Activated T-helper 1 cell treated with anti-CD3 and anti-CD28 coated beads, Interleukin-12 subunit alpha, Interleukin-12 subunit beta, Interleukin-2, Interleukin-4 antibody, amounts not matched to agents 30 ng/mL and 10 ng/mL and 1 ng/mL, durations not matched to agents 14 hours and 24 hours and 36 hours (primary cell): ENCODE measurements at regions of chr9 and their contacts with region 1.

Region 1: GRCh38 chr9:34603610-34604231 is 8.2 kb downstream of the RPP25L start:
- DNase-seq: peak; percentile 68
- H3K4me3 Mint-ChIP-seq: no peak overlapping the region
- H3K27ac Mint-ChIP-seq: no peak overlapping the region
- H3K4me1 Mint-ChIP-seq: no peaks in the 10 kb centered on the region
- H3K27me3 Mint-ChIP-seq: peaks cover 11% of the 10 kb centered on the region

Region 2: DNA sequence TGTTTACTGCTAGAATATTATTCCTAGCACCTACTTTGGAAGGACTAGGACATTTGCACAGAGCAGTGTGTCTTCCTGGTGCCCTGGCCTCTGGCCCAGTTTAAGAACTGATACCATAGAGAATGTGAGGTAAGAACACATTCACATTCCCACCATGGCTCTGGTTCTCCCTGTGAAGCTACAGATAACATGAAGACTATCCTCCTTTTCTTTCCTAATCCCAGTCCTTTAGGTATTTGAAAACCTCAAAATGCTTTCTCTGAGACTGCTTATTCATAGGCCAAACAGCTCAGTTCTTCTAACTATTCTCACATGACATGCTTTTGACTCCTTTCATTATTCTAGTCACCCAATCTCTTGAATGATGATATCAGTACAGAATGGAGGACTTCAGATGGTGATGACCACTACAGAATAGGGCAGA is 157.2 kb before region 1 on chr9:
- intact Hi-C with region 1: no loop called
- DNase-seq: no peak
- H3K4me3 Mint-ChIP-seq: no peak overlapping the region
- H3K27ac Mint-ChIP-seq: no peak overlapping the region
- H3K4me1 Mint-ChIP-seq: peaks cover 9% of the 10 kb centered on the region
- H3K27me3 Mint-ChIP-seq: no peaks in the 10 kb centered on the region

Region 3: DNA sequence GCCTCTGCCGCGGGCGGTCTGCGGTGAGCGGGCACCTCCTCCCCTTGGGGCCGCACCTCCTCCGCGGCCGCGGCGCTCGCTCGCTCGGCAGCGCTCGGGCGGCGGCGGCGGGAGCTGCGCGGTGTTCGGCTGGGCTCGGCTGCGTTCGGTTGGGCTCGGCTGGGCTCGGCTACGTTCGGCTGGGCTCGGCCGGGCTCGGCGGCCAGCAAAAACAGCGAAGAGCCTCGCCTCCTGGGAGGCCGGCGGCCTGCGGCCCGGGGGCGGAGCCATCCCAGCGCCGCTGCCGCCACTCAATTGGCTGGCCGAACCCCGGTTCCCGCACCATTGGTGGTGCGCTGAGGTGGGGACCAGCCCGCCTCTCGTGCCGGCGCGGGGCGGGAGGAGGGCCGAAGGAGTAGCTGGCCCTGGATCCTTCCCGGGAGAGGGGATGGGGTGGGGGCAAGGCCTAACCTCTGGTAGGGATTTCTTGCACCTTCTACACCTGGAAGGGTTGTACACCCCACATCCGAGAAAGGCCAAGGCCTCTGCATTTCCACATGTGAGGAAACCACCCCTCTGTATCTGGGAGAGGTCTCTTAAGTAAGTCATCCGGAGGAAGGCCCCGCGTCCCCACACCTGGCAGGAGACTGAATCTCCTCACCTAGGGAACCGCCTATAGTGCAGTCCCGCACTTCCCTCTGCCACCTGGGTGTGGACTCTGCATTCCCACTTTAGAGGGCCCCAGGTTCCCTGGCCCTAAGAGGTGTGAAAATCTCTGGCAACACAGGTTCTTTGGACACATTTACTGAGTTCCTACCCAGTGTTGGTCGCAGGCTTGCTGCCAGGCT is 80.5 kb before region 1 on chr9 and contains the start of gene ENHO:
- intact Hi-C with region 1: loop called (anchors 2 kb)
- DNase-seq: peak; percentile 91
- H3K4me3 Mint-ChIP-seq: peak within 1 kb of the TSS; percentile 73
- H3K27ac Mint-ChIP-seq: peak within 1 kb of the TSS; percentile 75
- H3K4me1 Mint-ChIP-seq: peaks cover 13% of the 10 kb centered on the region
- H3K27me3 Mint-ChIP-seq: peaks cover 49% of the 10 kb centered on the region
- total RNA-seq, gene ENHO: not detected in 2 replicates

Region 4: DNA sequence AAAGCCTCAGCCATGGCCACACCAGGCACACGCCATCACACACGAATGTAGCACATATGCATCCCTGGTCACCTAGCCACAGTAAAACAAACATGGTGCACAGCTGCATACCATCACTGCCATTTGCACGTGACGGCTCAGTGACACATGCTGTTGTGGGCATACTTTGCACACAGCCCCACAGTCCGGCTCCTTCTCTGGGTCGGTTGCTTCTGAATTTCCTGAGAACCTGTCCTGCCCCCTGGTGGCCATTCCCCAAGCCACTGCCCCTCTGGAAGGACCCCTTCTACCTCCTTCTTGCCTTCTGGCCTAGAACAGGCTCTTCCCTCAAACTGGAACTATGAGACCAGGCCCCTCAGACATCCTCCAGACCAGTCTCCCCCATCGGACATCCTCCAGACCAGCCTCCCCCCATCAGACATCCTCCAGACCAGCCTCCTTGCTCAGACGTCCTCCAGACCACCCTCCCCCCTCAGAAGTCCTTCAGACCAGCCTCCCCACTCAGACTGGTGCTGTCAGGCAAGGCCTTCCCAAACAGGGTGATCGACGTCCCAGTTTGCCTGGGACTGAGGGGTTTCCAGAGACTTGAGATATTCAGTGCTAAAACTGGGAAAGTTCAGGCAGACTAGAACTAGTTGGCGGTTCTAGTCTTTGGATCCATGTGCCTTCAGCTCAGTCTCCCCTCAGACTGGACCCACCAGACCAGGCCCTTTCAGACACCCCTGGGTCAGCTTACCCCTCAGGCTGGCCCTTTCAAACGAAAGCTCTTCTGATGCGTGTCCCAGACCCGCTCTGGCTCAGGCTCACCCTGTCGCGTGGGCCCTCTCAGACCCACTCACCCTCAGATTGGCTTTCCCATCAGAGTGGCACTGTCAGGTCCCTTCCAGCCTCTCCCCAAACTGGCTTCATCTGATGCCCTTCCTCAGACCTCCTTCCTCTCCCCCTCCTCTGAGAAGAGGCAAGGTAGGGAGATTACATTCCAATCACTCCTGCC is 56.6 kb before region 1 on chr9:
- intact Hi-C with region 1: loop called (anchors 1 kb)
- DNase-seq: no peak
- H3K4me3 Mint-ChIP-seq: no peak overlapping the region
- H3K27ac Mint-ChIP-seq: no peak overlapping the region
- H3K4me1 Mint-ChIP-seq: no peaks in the 10 kb centered on the region
- H3K27me3 Mint-ChIP-seq: peaks cover 14% of the 10 kb centered on the region

Region 5: GRCh38 chr9:34559624-34560452 is 43.9 kb before region 1 on chr9:
- intact Hi-C with region 1: loop called (anchors 5 kb)
- DNase-seq: no peak
- H3K4me3 Mint-ChIP-seq: no peak overlapping the region
- H3K27ac Mint-ChIP-seq: no peak overlapping the region
- H3K4me1 Mint-ChIP-seq: no peaks in the 10 kb centered on the region
- H3K27me3 Mint-ChIP-seq: peaks cover 6% of the 10 kb centered on the region

Region 6: DNA sequence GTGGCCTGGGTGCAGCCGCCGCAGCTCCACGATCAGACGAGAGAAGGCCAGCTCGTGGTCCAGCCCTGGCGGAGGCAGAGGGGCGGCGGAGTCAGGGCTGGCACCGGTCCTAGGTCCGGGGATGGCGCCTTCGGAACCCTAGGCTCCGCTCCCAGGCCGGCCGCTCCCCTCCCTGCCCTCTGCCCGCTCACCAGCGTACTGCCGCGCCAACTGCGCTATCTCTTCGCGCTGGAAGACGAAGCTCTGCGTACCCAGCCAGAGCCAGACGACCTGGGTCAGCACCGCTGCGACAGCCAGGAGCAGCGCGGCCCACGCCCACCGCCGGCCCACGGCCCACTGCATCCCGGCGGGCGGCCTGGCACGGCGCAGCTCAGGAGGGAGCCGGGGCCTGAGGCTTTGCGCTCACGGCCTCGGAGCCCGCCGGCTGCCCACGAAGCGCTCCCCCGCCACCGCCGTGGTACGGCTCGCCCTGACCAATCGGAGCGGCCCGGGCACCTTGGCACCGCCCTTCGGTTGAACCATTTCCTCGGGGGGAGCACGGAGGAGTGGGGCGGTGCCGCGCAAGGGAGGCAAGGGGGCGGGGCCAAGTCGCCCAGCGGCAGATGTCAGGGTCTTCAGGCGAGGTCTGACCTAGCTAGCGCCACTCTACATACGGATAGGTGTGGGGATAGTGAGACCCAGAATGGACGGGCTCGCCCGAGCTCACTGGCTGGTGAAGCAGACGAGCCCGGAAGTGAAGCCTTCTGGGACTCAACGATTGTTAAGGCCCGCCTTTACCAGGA is 33.8 kb after region 1 on chr9 and contains the start of gene SIGMAR1:
- intact Hi-C with region 1: loop called (anchors 5 kb)
- DNase-seq: peak; percentile 94
- H3K4me3 Mint-ChIP-seq: peak within 1 kb of the TSS; percentile 97
- H3K27ac Mint-ChIP-seq: peak within 1 kb of the TSS; percentile 88
- H3K4me1 Mint-ChIP-seq: peaks cover 39% of the 10 kb centered on the region
- H3K27me3 Mint-ChIP-seq: no peaks in the 10 kb centered on the region
- total RNA-seq, gene SIGMAR1: 128 and 130 TPM in 2 replicates